K562 (cell line): ENCODE measurements at regions of chr3 and their contacts with region 1.

Region 1: GRCh38 chr3:124467980-124468902 is 262.0 kb upstream of the UMPS start:
- DNase-seq: peak; percentile 56 to 74 (median 72)
- ATAC-seq: peak; percentile 93
- H3K4me3 ChIP-seq: no peak overlapping the region
- H3K27ac ChIP-seq: no peak overlapping the region
- H3K4me1 ChIP-seq: no peaks in the 10 kb centered on the region
- H3K27me3 ChIP-seq: no peaks in the 10 kb centered on the region
- CTCF ChIP-seq: peak; percentile 82 to 87 (median 83)
- EP300 ChIP-seq: no peak
- POLR2A ChIP-seq: no peak
- RAD21 ChIP-seq: peak; percentile 71 to 88

Region 2: DNA sequence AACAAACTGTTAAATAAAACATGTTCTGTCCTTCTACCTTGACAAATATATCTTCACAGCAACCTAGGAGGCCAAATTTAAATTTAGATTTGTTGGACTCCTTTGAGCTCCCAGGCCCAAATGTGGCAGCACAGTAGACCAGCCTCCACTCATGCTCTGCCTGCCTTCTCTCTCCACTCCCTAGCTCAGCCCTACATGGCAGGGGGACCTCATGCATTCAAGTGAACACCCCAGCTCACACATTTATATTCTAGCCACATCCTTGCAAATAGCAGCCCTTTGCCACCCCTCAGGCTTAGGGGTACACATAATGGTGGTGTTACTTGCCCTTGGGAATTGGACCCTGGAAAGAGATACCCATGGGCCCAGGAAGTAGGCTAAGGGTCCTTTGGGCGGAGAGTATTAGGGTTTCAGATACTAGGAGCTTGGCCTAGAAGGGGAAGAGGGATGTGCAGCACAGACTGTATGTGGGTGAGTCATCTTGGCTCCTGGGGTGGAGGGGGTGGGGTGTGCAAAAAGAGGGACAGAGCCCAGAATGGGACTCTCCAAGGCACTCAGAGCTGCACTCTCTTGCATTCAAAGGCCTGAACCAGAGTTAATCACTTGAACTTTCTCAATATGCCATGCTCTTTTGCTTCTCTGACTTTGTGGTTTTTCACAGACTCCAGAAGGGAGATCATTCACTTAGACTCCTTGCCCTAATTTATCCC is 207.9 kb before region 1 on chr3:
- CTCF ChIA-PET with region 1: no interaction called
- POLR2A ChIA-PET with region 1: no interaction called
- in situ Hi-C with region 1: no loop called
- intact Hi-C with region 1: no loop called
- DNase-seq: peak in 2 of 4 experiments; percentile 0 to 6
- ATAC-seq: no peak
- H3K4me3 ChIP-seq: no peak overlapping the region
- H3K27ac ChIP-seq: no peak overlapping the region
- H3K4me1 ChIP-seq: no peaks in the 10 kb centered on the region
- H3K27me3 ChIP-seq: no peaks in the 10 kb centered on the region; a peak in 1 of 5 replicates
- CTCF ChIP-seq: no peak
- EP300 ChIP-seq: no peak
- POLR2A ChIP-seq: no peak
- RAD21 ChIP-seq: no peak

Region 3: GRCh38 chr3:124333931-124334640 is 134.2 kb before region 1 on chr3:
- CTCF ChIA-PET with region 1: no interaction called
- POLR2A ChIA-PET with region 1: no interaction called
- in situ Hi-C with region 1: no loop called
- intact Hi-C with region 1: loop called (anchors 1 kb)
- DNase-seq: no peak
- ATAC-seq: no peak
- H3K4me3 ChIP-seq: no peak overlapping the region
- H3K27ac ChIP-seq: no peak overlapping the region
- H3K4me1 ChIP-seq: no peaks in the 10 kb centered on the region
- H3K27me3 ChIP-seq: peaks cover 3 to 14% of the 10 kb centered on the region in 2 experiments; a peak in 2 of 5 replicates
- CTCF ChIP-seq: no peak
- EP300 ChIP-seq: no peak
- POLR2A ChIP-seq: no peak
- RAD21 ChIP-seq: no peak

Region 4: DNA sequence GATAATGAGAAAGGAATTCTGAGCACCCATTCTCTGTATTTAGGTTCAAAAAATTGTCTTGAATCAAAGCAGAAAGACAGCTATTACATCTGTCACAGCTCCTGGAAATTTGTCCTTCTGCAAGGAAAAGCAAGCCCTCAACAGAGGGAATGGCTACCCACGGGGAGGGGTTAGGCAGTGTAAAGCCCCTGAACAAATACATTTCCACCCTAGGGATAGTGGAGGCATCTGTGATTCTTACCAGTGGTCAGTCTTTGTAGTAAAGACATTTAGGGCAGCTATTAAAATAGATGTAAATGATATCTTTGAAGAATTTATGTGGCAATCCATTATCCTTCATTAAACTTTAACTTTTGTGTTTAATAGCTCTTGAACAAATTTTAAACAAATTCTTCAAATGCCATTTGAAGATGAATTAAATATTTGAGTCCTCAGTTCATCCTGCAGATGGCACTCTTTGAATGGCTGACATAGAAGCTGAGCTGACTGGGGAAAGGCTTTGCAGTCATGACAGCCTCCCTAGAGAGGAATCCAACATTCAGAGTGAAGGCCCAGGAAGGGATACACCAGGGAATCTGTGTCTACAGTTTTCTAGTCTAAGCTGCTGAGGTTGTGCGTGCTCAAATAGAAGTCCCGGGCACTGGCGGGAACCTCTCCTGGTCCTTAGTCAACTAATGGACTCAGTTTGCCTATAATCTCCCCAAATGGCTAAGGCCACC is 116.7 kb before region 1 on chr3:
- CTCF ChIA-PET with region 1: interaction called, 30 read pairs
- POLR2A ChIA-PET with region 1: no interaction called
- in situ Hi-C with region 1: loop called (anchors 5 kb)
- intact Hi-C with region 1: loop called (anchors 1 kb)
- DNase-seq: peak; percentile 13 to 32 (median 22)
- ATAC-seq: peak; percentile 62; the same call in 1 of the 3 replicates
- H3K4me3 ChIP-seq: no peak overlapping the region
- H3K27ac ChIP-seq: no peak overlapping the region
- H3K4me1 ChIP-seq: no peaks in the 10 kb centered on the region
- H3K27me3 ChIP-seq: no peaks in the 10 kb centered on the region
- CTCF ChIP-seq: peak; percentile 15 to 62 (median 48); a peak in 3 of 6 replicates
- EP300 ChIP-seq: no peak
- POLR2A ChIP-seq: no peak
- RAD21 ChIP-seq: peak; percentile 49 to 65

Region 5: GRCh38 chr3:124358156-124358555 is 110.1 kb before region 1 on chr3:
- CTCF ChIA-PET with region 1: interaction called, 30 read pairs
- POLR2A ChIA-PET with region 1: no interaction called
- in situ Hi-C with region 1: loop called (anchors 5 kb)
- intact Hi-C with region 1: no loop called
- DNase-seq: no peak
- ATAC-seq: no peak
- H3K4me3 ChIP-seq: no peak overlapping the region
- H3K27ac ChIP-seq: no peak overlapping the region
- H3K4me1 ChIP-seq: no peaks in the 10 kb centered on the region
- H3K27me3 ChIP-seq: no peaks in the 10 kb centered on the region
- CTCF ChIP-seq: no peak
- EP300 ChIP-seq: no peak
- POLR2A ChIP-seq: no peak
- RAD21 ChIP-seq: no peak

Region 6: GRCh38 chr3:124529826-124530571 is 61.8 kb after region 1 on chr3:
- CTCF ChIA-PET with region 1: no interaction called
- POLR2A ChIA-PET with region 1: no interaction called
- in situ Hi-C with region 1: no loop called
- intact Hi-C with region 1: no loop called
- DNase-seq: no peak
- ATAC-seq: no peak
- H3K4me3 ChIP-seq: no peak overlapping the region
- H3K27ac ChIP-seq: no peak overlapping the region
- H3K4me1 ChIP-seq: no peaks in the 10 kb centered on the region
- H3K27me3 ChIP-seq: no peaks in the 10 kb centered on the region
- CTCF ChIP-seq: no peak
- EP300 ChIP-seq: no peak
- POLR2A ChIP-seq: no peak
- RAD21 ChIP-seq: no peak